CD8-positive, alpha-beta T cell (primary cell): ENCODE measurements at regions of chr1 and their contacts with region 1.

Region 1: GRCh38 chr1:39098546-39099250 is 72.5 kb downstream of the NDUFS5 start:
- DNase-seq: peak; percentile 18 to 87 (median 61)
- ATAC-seq: peak; percentile 77
- H3K4me3 ChIP-seq: no peak overlapping the region
- H3K4me3 Mint-ChIP-seq: no peak overlapping the region
- H3K27ac ChIP-seq: no peak overlapping the region
- H3K27ac Mint-ChIP-seq: no peak overlapping the region
- H3K4me1 ChIP-seq: peaks cover 14% of the 10 kb centered on the region
- H3K4me1 Mint-ChIP-seq: peaks cover 21% of the 10 kb centered on the region
- H3K27me3 ChIP-seq: no peaks in the 10 kb centered on the region
- H3K27me3 Mint-ChIP-seq: no peaks in the 10 kb centered on the region
- CTCF ChIP-seq: peak; percentile 54

Region 2: DNA sequence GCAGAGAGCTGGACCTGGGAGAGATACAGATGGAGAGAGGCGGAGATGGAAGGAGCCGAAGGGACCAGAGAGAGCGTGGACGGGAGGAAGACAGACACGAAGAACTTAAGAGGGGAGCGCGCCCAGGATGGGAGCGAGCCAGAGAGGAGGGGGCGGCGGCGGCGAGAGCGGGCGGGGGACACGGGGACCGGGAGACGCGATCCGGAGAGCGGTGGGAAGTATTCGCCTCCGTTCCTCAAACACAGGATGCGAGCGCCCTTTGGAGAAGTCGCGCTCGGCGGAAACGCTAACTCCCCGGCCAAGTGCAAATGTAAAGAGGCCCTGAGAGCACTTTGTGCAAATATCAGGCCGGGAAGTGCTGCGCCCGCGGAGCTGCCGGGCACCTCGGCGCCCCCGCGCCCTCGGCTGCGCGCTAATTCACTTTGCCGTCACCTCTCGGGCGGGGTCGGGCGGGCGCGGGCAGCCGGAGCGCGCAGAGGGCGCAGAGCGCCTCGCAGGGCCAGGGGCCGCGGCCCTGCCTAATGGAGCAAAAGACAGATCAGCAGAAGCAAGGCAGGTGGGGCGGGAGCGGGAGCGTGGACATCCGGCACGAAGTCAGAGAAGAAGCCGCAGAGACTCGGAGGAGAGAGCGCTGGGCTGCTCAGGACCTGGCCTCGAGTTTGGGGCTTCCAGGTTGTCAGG is 520.3 kb before region 1 on chr1:
- CTCF ChIA-PET with region 1: no interaction called
- POLR2A ChIA-PET with region 1: no interaction called
- intact Hi-C with region 1: no loop called
- DNase-seq: peak in 1 of 9 experiments; percentile 49
- ATAC-seq: no peak
- H3K4me3 ChIP-seq: no peak overlapping the region
- H3K4me3 Mint-ChIP-seq: peak overlapping the region; percentile 58
- H3K27ac ChIP-seq: no peak overlapping the region
- H3K27ac Mint-ChIP-seq: no peak overlapping the region
- H3K4me1 ChIP-seq: peaks cover 4% of the 10 kb centered on the region
- H3K4me1 Mint-ChIP-seq: peaks cover 10% of the 10 kb centered on the region
- H3K27me3 ChIP-seq: peaks cover 6 to 9% of the 10 kb centered on the region in 2 experiments
- H3K27me3 Mint-ChIP-seq: peaks cover 55% of the 10 kb centered on the region
- CTCF ChIP-seq: no peak

Region 3: DNA sequence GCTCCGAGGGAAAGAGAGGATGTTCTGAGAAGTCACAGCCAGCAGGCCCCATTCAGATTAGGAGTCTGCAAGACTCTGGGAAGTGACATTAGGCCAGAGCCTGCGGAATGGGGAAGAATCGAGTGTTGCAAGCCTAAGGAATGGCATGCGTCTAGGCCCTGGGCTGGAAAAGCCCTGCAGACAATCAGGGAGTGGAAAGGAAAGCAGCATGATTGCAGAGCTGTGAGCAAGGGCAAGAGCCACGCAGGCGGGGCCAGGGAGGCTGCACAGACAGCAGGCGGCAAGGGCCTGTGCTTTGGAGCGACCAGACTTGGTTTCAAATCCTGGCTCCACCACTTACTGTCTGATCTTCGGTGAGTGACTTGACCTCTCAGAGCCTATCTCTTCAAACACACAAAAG is 357.4 kb before region 1 on chr1:
- CTCF ChIA-PET with region 1: no interaction called
- POLR2A ChIA-PET with region 1: no interaction called
- intact Hi-C with region 1: no loop called
- DNase-seq: no peak
- ATAC-seq: no peak
- H3K4me3 ChIP-seq: no peak overlapping the region
- H3K4me3 Mint-ChIP-seq: no peak overlapping the region
- H3K27ac ChIP-seq: no peak overlapping the region
- H3K27ac Mint-ChIP-seq: no peak overlapping the region
- H3K4me1 ChIP-seq: no peaks in the 10 kb centered on the region
- H3K4me1 Mint-ChIP-seq: no peaks in the 10 kb centered on the region
- H3K27me3 ChIP-seq: no peaks in the 10 kb centered on the region
- H3K27me3 Mint-ChIP-seq: no peaks in the 10 kb centered on the region
- CTCF ChIP-seq: no peak

Region 4: DNA sequence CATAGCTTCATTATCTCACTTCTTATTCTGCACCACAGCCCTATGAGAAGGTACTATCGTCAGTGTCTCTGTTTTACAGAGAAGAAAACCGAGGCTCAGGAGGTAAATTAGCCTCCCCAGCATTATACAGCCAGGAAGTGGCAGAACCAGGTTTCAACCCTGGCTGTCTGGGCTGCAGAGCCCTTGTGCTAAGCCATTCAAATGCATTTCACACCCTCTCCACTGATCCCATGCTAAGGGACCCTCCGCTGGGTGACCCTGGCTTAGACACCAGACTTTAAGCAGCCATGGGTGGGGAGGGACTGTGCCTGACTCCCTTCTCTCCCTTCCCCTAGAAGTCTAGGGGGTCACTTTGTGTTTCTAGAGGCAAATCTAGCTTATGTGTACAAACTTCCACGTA is 326.7 kb before region 1 on chr1:
- CTCF ChIA-PET with region 1: no interaction called
- POLR2A ChIA-PET with region 1: no interaction called
- intact Hi-C with region 1: no loop called
- DNase-seq: no peak
- ATAC-seq: no peak
- H3K4me3 ChIP-seq: no peak overlapping the region
- H3K4me3 Mint-ChIP-seq: no peak overlapping the region
- H3K27ac ChIP-seq: no peak overlapping the region
- H3K27ac Mint-ChIP-seq: no peak overlapping the region
- H3K4me1 ChIP-seq: no peaks in the 10 kb centered on the region
- H3K4me1 Mint-ChIP-seq: no peaks in the 10 kb centered on the region
- H3K27me3 ChIP-seq: no peaks in the 10 kb centered on the region
- H3K27me3 Mint-ChIP-seq: peaks cover 23% of the 10 kb centered on the region
- CTCF ChIP-seq: no peak

Region 5: DNA sequence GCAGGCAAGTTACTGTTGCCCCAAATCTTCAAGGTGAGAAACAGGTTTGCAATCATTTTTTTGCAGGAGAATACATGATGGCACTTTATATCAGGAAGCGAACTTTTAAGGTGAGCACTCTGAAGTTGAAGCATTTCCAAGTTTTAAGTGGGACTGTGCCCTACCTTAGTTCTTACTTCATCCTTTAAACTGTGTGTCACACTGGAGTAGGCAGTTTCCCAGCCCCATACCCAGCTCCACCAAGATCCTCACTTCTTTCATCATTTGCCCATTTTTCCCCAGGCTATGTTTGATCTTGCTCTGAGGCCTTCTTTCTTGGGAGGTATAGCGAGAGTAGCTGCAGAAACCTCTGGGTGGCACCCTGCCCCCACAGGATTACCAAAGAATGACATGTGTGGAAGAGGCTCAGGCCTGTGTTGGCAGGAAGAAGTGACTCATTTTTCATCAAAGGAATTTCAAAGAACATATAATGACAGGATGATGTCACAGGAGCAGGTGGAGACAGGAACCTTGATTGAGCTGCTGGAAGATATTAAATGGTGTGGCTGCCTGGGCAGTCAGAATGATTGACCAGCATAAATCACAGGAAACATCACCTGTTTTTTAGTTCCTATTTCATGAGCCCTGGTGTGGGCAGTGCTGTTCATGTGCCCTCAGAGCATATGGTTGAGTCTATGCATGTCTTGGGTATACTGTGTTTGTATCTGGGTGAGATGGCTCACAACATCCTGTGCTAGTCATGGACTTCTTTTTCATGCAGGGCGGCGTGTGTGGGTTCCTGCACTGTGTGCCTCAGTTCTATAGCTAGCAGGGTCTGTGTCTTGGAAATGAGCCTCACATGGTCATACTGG is 85.0 kb after region 1 on chr1:
- CTCF ChIA-PET with region 1: interaction called, 84 read pairs
- POLR2A ChIA-PET with region 1: no interaction called
- intact Hi-C with region 1: loop called in 1 of 2 experiments (anchors 1 kb)
- DNase-seq: peak; percentile 60 to 93 (median 83)
- ATAC-seq: peak; percentile 87
- H3K4me3 ChIP-seq: no peak overlapping the region
- H3K4me3 Mint-ChIP-seq: no peak overlapping the region
- H3K27ac ChIP-seq: peak overlapping the region; percentile 46 to 69
- H3K27ac Mint-ChIP-seq: peak overlapping the region; percentile 97
- H3K4me1 ChIP-seq: peaks cover 20% of the 10 kb centered on the region
- H3K4me1 Mint-ChIP-seq: peaks cover 34% of the 10 kb centered on the region
- H3K27me3 ChIP-seq: no peaks in the 10 kb centered on the region
- H3K27me3 Mint-ChIP-seq: no peaks in the 10 kb centered on the region
- CTCF ChIP-seq: peak; percentile 71

Region 6: GRCh38 chr1:39258146-39258924 is 159.6 kb after region 1 on chr1:
- CTCF ChIA-PET with region 1: interaction called, 28 read pairs
- POLR2A ChIA-PET with region 1: interaction called, 3 read pairs
- intact Hi-C with region 1: loop called (anchors 1 kb)
- DNase-seq: peak; percentile 40 to 81 (median 68)
- ATAC-seq: peak; percentile 77
- H3K4me3 ChIP-seq: no peak overlapping the region
- H3K4me3 Mint-ChIP-seq: no peak overlapping the region
- H3K27ac ChIP-seq: peak overlapping the region in 1 of 2 experiments; percentile 28
- H3K27ac Mint-ChIP-seq: peak overlapping the region; percentile 57
- H3K4me1 ChIP-seq: peaks cover 11% of the 10 kb centered on the region
- H3K4me1 Mint-ChIP-seq: peaks cover 28% of the 10 kb centered on the region
- H3K27me3 ChIP-seq: no peaks in the 10 kb centered on the region
- H3K27me3 Mint-ChIP-seq: no peaks in the 10 kb centered on the region
- CTCF ChIP-seq: peak; percentile 91

Region 7: DNA sequence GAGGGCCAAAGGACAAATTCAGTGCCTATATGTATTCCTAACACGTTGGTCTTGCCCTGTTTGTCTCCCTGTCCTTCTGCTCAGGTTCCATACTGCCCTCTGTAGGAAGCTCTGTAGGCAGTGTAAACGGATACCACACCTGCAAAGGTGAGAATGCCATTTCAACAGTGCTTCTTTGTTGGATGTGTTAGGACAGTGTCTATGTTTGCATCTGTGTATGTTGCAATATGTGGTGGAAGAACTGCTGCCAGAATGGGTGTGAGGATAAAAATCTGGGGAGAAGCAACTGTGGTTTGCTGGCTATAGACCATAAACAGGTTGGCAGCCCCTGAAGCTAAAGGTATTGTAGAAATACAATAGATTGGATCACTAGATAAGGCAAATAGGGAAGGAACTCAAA is 279.7 kb after region 1 on chr1:
- CTCF ChIA-PET with region 1: interaction called, 6 read pairs
- POLR2A ChIA-PET with region 1: no interaction called
- intact Hi-C with region 1: loop called in 1 of 2 experiments (anchors 10 kb)
- DNase-seq: peak in 2 of 9 experiments; percentile 19 to 36
- ATAC-seq: no peak
- H3K4me3 ChIP-seq: no peak overlapping the region
- H3K4me3 Mint-ChIP-seq: no peak overlapping the region
- H3K27ac ChIP-seq: no peak overlapping the region
- H3K27ac Mint-ChIP-seq: peak overlapping the region; percentile 33
- H3K4me1 ChIP-seq: no peaks in the 10 kb centered on the region
- H3K4me1 Mint-ChIP-seq: no peaks in the 10 kb centered on the region
- H3K27me3 ChIP-seq: no peaks in the 10 kb centered on the region
- H3K27me3 Mint-ChIP-seq: no peaks in the 10 kb centered on the region
- CTCF ChIP-seq: no peak

Region 8: DNA sequence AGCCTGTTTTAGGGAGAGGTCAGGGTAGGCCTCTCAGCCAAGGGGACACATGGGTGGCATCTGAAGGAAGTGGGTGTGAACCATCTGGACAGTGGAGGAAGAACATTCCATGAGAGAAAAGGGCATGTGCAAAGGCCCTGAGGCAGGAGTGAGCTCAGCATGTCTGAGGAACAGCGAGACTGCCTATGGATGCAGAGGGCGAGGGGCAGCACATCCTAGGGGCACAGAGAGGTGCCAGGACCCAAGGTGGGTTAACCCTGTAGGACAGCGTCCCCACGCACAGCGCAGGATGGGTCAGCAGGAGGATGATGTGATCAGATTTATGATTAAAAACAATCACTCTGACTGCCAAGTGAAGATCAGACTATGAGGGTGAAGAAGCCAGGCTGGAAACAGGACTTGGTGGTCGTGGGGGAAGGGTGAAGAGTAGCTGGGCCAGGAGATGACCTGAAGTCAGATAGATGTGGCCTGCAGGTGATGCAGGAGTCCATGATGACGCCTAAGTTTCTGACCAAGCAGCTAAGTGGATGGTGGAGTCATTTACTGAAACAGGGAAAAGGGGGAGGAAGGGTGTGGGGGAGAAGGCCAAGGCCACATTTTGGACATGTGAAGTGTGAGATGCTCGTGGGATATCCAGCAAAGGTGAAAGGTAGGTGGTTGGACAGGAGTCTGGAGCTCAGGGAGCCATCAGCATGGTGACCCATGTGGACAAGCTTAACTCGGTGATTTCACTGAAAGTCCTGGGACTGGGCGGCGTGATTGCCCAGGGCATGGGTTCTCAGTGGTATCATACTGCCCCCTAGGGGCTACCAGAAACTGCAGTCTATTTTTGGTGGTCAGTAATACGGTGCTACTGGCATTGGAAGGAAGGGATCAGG is 440.1 kb after region 1 on chr1:
- CTCF ChIA-PET with region 1: interaction called, 31 read pairs
- POLR2A ChIA-PET with region 1: no interaction called
- intact Hi-C with region 1: loop called (anchors 1 kb)
- DNase-seq: peak in 8 of 9 experiments; percentile 16 to 71 (median 43)
- ATAC-seq: peak; percentile 67
- H3K4me3 ChIP-seq: no peak overlapping the region
- H3K4me3 Mint-ChIP-seq: no peak overlapping the region
- H3K27ac ChIP-seq: no peak overlapping the region
- H3K27ac Mint-ChIP-seq: no peak overlapping the region
- H3K4me1 ChIP-seq: no peaks in the 10 kb centered on the region
- H3K4me1 Mint-ChIP-seq: no peaks in the 10 kb centered on the region
- H3K27me3 ChIP-seq: no peaks in the 10 kb centered on the region
- H3K27me3 Mint-ChIP-seq: no peaks in the 10 kb centered on the region
- CTCF ChIP-seq: peak; percentile 77

Region 9: GRCh38 chr1:39701049-39701439 is 602.3 kb after region 1 on chr1:
- CTCF ChIA-PET with region 1: no interaction called
- POLR2A ChIA-PET with region 1: no interaction called
- intact Hi-C with region 1: no loop called
- DNase-seq: no peak
- ATAC-seq: no peak
- H3K4me3 ChIP-seq: no peak overlapping the region
- H3K4me3 Mint-ChIP-seq: no peak overlapping the region
- H3K27ac ChIP-seq: no peak overlapping the region
- H3K27ac Mint-ChIP-seq: no peak overlapping the region
- H3K4me1 ChIP-seq: no peaks in the 10 kb centered on the region
- H3K4me1 Mint-ChIP-seq: no peaks in the 10 kb centered on the region
- H3K27me3 ChIP-seq: no peaks in the 10 kb centered on the region
- H3K27me3 Mint-ChIP-seq: peaks cover 14% of the 10 kb centered on the region
- CTCF ChIP-seq: no peak

Region 10: DNA sequence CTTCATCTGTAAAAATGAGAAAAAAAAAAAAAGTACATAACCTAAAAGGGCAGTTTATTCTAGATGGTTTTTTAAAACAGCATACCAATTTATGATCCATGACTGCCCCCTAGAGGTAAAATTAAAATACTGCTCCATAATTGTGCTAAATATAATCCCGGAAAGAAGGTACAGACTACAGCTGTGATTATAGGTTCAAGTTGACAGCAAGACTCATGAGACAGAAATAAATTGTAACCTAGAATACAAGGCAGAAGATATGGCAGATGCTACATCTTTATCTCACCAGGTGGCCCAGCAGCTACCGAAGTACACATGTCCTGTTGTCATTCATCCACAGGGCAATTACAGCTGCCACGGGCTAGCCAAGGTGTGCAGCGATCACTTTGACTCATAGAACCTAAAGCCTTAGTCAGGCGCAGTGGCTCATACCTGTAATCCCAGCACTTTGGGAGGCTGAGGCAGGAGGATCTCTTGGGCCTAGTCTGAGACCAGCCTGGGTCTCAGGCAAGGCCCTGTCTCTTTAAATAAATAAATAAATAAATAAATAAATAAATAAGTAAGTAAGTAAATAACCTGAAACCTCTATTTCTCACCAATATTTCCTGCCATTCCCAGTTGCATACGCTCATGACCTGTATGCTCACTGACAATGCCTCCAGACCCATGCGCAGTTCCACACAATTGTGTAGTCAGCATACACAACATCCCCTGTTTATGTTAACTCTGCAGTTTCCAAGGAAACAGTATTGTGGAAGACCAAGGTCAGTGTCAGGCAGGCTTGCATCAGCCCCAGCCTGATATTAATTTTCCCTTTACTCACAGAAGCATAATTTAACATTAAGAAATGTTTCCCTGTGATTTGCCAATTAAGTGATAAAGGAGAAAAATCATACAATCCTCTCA is 621.6 kb after region 1 on chr1:
- CTCF ChIA-PET with region 1: no interaction called
- POLR2A ChIA-PET with region 1: no interaction called
- intact Hi-C with region 1: loop called (anchors 10 kb)
- DNase-seq: peak in 3 of 9 experiments; percentile 12 to 80 (median 72)
- ATAC-seq: peak; percentile 85
- H3K4me3 ChIP-seq: no peak overlapping the region
- H3K4me3 Mint-ChIP-seq: no peak overlapping the region
- H3K27ac ChIP-seq: no peak overlapping the region
- H3K27ac Mint-ChIP-seq: no peak overlapping the region
- H3K4me1 ChIP-seq: no peaks in the 10 kb centered on the region
- H3K4me1 Mint-ChIP-seq: no peaks in the 10 kb centered on the region
- H3K27me3 ChIP-seq: no peaks in the 10 kb centered on the region
- H3K27me3 Mint-ChIP-seq: peaks cover 38% of the 10 kb centered on the region
- CTCF ChIP-seq: peak; percentile 91